ENCODE measurements at regions of chr17 and their contacts with region 1.

Region 1: DNA sequence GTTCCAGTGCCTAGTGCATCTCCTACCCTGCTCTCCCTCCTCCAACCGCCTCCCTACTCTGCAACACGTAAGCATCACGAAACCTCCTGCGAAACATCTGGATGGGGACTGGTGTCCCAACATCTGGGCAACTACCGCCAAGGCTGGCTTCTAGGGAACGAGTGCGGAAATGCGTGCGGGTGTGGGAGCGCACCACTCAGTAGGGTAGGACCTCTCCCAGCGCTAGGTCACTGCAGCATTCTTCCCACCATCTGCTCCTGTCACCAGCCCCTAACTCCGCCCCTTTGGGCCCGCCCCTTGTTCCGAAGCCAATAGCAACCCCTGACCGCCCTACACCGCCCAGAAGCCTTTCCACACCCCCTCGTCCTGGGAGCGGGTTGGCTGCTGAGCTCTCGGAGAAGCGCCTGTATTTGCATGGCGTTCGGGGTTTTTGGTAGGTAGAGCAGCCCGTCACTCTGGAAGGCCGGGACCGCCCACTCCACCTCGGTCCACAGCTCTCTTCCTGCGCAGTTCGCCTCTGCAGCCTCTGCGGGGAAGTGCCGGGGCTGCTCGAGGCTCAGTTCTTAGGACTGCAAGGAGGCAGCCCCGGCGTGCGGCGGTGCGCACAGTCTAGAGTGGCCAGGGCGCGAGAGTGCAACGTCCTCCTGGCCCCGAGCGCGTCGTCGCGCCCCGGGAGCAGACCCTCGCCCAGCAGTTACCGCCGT is at the start of gene HS3ST3B1:
- DNase-seq: peak; percentile 99
- H3K4me3 Mint-ChIP-seq: peak within 1 kb of the TSS; percentile 84
- H3K27ac Mint-ChIP-seq: peak within 1 kb of the TSS; percentile 97
- H3K4me1 Mint-ChIP-seq: peaks cover 61% of the 10 kb centered on the region
- H3K27me3 Mint-ChIP-seq: peaks cover 28% of the 10 kb centered on the region
- total RNA-seq, gene HS3ST3B1: 28.9 to 29.9 TPM

Region 2: DNA sequence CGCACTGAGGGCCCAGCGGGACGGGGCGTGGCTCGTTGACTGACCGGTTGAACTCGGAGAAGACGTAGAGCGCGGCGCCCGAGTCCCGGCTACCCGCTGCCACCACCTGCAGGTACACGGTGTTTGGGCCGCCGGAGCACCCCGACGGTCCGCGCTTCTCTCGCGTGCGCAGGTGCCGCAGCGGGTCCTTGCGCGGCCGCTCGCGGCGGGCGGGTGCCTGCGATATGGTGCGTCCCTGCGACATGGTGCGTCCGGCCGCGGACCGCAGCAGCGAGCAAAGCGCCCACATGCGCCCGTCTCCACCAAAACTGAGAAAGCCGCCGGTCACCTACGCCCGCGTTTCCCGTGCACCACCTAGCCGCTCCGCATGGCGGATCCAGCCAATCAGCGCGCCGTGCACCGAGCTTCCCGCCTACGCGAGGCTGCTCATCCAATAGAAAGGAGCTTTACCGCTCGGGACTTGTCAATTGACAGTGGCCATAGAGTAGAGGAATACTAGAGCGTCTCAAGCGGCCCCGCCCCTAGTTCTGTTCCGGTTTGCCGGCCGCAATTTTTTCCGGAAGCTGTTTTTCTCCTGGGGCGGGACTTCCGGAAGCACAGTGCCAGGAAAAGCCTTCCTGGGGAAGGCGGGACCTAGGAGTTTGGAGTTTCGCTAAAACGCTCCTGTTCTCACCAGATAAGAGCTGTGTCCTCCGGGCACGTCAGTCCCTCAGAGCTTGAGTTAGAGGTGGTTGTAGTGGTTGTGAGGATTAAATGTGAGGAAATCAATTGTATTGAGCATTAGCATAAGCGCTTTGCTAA is 1282.9 kb before region 1 on chr17 and contains the start of gene ELAC2:
- CTCF ChIA-PET with region 1: interaction called, 5 read pairs
- POLR2A ChIA-PET with region 1: interaction called, 14 read pairs
- DNase-seq: peak; percentile 96
- H3K4me3 Mint-ChIP-seq: peak within 1 kb of the TSS; percentile 96
- H3K27ac Mint-ChIP-seq: peak within 1 kb of the TSS; percentile 89
- H3K4me1 Mint-ChIP-seq: peaks cover 32% of the 10 kb centered on the region
- H3K27me3 Mint-ChIP-seq: no peaks in the 10 kb centered on the region
- total RNA-seq, gene ELAC2: 50.8 to 54.0 TPM

Region 3: GRCh38 chr17:14069251-14070021 is 231.3 kb before region 1 on chr17 and contains the start of gene COX10:
- CTCF ChIA-PET with region 1: interaction called, 12 read pairs
- POLR2A ChIA-PET with region 1: interaction called, 36 read pairs
- DNase-seq: peak; percentile 87
- H3K4me3 Mint-ChIP-seq: peak within 1 kb of the TSS; percentile 95
- H3K27ac Mint-ChIP-seq: peak within 1 kb of the TSS; percentile 82
- H3K4me1 Mint-ChIP-seq: peaks cover 61% of the 10 kb centered on the region
- H3K27me3 Mint-ChIP-seq: no peaks in the 10 kb centered on the region
- total RNA-seq, gene COX10: 24.5 to 25.2 TPM

Region 4: DNA sequence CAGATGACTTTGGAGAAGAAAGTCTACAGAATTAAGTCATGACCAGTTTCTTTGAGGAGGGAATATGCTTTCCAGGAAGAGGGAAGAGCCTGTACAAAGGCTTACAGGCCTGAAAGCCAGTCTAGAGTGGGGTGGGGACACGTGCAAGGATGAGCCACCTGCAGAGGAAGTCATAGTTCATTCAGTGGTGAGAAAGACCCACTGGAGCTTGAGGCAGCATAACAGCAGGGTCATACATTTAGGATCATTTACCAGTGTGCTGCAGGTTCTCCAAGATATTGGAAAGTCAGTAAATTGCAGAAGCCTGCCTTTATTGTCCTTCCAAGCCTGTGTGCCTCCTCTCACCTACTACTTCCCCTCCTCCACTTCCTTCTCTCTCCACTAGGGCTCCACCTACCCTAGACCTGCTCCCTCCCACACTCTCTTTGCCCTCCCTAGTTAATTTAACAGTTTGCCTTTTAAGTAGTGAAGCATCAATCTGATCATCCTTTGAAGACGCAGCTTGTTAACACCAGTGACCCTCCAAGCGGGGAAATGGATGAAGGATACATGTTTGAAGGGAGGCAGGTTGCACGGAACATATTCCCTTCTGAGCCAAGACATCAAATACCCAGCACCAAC is 104.2 kb before region 1 on chr17:
- CTCF ChIA-PET with region 1: interaction called, 74 read pairs
- POLR2A ChIA-PET with region 1: interaction called, 194 read pairs
- DNase-seq: peak; percentile 33
- H3K4me3 Mint-ChIP-seq: peak overlapping the region; percentile 53
- H3K27ac Mint-ChIP-seq: peak overlapping the region; percentile 98
- H3K4me1 Mint-ChIP-seq: peaks cover 88% of the 10 kb centered on the region
- H3K27me3 Mint-ChIP-seq: no peaks in the 10 kb centered on the region

Region 5: GRCh38 chr17:14228903-14229302 is 71.8 kb before region 1 on chr17:
- CTCF ChIA-PET with region 1: no interaction called
- POLR2A ChIA-PET with region 1: no interaction called
- DNase-seq: no peak
- H3K4me3 Mint-ChIP-seq: no peak overlapping the region
- H3K27ac Mint-ChIP-seq: no peak overlapping the region
- H3K4me1 Mint-ChIP-seq: no peaks in the 10 kb centered on the region
- H3K27me3 Mint-ChIP-seq: no peaks in the 10 kb centered on the region

Region 6: DNA sequence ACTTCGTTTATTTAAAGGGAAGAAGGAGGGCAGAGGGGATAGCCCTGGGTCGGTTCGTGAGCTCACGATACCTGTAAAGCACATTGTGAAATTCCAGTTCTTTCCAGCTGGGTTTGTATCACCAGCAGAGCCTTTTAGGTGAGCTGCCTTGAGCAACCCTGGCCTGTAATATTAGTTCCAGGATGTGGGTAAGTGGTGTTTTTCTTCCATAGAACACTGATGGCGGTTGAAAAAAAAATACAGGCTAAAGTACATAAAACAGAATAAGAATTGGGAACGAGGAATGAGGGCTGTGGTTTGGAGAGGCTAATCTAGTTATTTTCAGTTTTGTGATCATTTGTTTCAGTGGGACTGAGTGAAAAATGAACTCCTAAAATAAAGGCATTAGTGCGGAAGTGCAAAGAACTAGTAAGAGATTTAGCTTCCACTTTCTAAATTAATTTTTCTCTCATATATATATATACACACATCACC is 20.8 kb after region 1 on chr17:
- CTCF ChIA-PET with region 1: interaction called, 10 read pairs
- POLR2A ChIA-PET with region 1: interaction called, 7 read pairs
- DNase-seq: no peak
- H3K4me3 Mint-ChIP-seq: peak overlapping the region; percentile 14
- H3K27ac Mint-ChIP-seq: peak overlapping the region; percentile 27
- H3K4me1 Mint-ChIP-seq: peaks cover 46% of the 10 kb centered on the region
- H3K27me3 Mint-ChIP-seq: no peaks in the 10 kb centered on the region

Region 7: DNA sequence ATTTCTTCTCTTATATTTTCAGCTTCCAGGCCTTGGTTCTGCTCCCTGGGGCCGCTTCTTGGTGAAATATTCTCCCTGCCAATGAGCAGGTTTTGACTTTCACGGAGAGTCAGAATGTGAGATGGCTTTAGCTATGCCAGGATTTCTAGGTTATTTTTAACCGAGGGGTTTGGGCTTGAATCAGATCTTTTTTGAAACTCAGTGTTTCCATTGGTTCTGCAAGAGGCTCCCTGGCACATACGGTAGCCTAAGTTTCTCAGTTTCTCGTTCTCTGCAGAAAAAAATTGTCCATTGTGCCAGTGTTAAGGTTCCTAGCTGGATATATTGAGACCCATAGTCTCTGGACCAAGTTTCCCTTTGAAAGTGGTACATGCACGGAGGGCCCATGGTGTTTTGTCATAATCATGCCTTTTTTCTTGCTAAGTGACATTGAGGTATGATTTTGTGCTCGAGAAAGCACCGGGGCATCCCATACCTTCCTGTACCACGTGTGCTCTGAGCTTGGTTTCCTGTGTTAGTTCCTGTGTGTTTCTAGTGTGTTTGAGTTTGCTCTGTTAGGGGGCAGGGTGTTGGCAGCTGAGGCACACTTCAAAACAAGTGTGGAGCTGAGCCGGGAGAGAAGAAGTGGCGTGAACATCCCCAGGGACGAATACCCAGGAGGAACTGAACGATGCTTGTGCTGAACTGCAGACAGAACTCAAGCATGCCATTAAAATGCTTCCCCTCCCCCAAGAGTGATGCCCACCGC is 127.3 kb after region 1 on chr17:
- CTCF ChIA-PET with region 1: interaction called, 9 read pairs
- POLR2A ChIA-PET with region 1: interaction called, 29 read pairs
- DNase-seq: peak; percentile 68
- H3K4me3 Mint-ChIP-seq: peak overlapping the region; percentile 49
- H3K27ac Mint-ChIP-seq: peak overlapping the region; percentile 77
- H3K4me1 Mint-ChIP-seq: peaks cover 40% of the 10 kb centered on the region
- H3K27me3 Mint-ChIP-seq: no peaks in the 10 kb centered on the region